Heart left ventricle (tissue), 16 donors: ENCODE measurements at regions of chr2 and their contacts with region 1.

Region 1: GRCh38 chr2:64750817-64751285 is 97.1 kb upstream of the SERTAD2 start:
- DNase-seq: peak; percentile 99 to 100 (median 100)
- ATAC-seq: peak; percentile 92 to 95 (median 94)
- H3K4me3 ChIP-seq: peak overlapping the region; percentile 50 to 88 (median 78)
- H3K27ac ChIP-seq: peak overlapping the region; percentile 74 to 99 (median 97)
- H3K4me1 ChIP-seq: peaks cover 0 to 30% (median 16%) of the 10 kb centered on the region in 12 donors
- H3K27me3 ChIP-seq: no peaks in the 10 kb centered on the region
- CTCF ChIP-seq: peak in 4 of 12 donors; percentile 15 to 46 (median 23)
- POLR2A ChIP-seq: peak; percentile 85 to 99

Region 2: GRCh38 chr2:64523666-64524603 is 226.9 kb before region 1 on chr2 and contains the start of gene AFTPH:
- intact Hi-C with region 1: loop called in 2 of 10 experiments (anchors 1 to 10 kb)
- DNase-seq: peak; percentile 99 to 100 (median 99)
- ATAC-seq: peak; percentile 99 to 100 (median 99)
- H3K4me3 ChIP-seq: peak within 1 kb of the TSS; percentile 70 to 97 (median 94)
- H3K27ac ChIP-seq: peak within 1 kb of the TSS; percentile 85 to 98 (median 94)
- H3K4me1 ChIP-seq: peaks cover 0 to 42% (median 28%) of the 10 kb centered on the region in 12 donors
- H3K27me3 ChIP-seq: no peaks in the 10 kb centered on the region
- CTCF ChIP-seq: no peak
- POLR2A ChIP-seq: peak in 1 of 2 donors; percentile 77
- total RNA-seq, gene AFTPH: 9.2 to 15.2 (median 11.4) TPM

Region 3: DNA sequence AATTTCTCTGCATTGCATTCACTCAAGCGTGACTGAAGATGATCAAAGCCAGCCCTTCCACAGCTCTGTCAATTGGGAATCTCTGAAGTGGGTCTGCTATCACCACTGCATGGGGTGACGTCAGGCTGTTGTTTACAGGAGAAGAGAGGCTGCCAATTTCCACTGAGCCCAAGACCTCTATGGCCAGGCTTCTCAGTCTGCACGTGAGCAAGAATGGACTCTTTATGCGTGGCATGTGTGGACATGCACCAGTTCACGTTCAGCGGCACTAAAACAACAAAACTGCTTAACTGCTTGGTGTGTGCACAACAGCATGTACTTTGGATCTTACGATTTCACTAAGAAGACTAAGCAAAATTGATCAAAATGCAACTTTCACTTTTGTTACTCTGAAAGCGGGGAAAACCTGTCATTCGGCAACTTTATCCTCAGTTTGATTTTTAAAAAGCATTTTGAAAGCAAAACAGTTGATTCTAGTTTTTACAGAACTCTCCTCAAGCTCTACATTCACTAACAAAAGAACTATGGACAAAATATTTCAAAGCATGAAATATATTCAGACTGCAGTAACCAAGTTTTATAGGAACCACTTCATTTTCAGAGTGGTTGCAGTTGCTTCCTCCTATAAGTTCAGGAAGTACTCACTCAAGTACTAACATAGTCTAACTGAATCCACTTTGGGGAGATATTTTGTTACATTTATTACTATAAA is 20.1 kb before region 1 on chr2:
- intact Hi-C with region 1: loop called in 1 of 10 experiments (anchors 2 kb)
- DNase-seq: peak in 4 of 5 donors; percentile 50 to 77 (median 66)
- ATAC-seq: peak; percentile 73 to 93 (median 90)
- H3K4me3 ChIP-seq: peak overlapping the region in 11 of 12 donors; percentile 3 to 60 (median 47)
- H3K27ac ChIP-seq: peak overlapping the region in 11 of 12 donors; percentile 29 to 92 (median 60)
- H3K4me1 ChIP-seq: peaks cover 0 to 52% (median 10%) of the 10 kb centered on the region in 12 donors
- H3K27me3 ChIP-seq: no peaks in the 10 kb centered on the region
- CTCF ChIP-seq: no peak
- POLR2A ChIP-seq: no peak

Region 4: DNA sequence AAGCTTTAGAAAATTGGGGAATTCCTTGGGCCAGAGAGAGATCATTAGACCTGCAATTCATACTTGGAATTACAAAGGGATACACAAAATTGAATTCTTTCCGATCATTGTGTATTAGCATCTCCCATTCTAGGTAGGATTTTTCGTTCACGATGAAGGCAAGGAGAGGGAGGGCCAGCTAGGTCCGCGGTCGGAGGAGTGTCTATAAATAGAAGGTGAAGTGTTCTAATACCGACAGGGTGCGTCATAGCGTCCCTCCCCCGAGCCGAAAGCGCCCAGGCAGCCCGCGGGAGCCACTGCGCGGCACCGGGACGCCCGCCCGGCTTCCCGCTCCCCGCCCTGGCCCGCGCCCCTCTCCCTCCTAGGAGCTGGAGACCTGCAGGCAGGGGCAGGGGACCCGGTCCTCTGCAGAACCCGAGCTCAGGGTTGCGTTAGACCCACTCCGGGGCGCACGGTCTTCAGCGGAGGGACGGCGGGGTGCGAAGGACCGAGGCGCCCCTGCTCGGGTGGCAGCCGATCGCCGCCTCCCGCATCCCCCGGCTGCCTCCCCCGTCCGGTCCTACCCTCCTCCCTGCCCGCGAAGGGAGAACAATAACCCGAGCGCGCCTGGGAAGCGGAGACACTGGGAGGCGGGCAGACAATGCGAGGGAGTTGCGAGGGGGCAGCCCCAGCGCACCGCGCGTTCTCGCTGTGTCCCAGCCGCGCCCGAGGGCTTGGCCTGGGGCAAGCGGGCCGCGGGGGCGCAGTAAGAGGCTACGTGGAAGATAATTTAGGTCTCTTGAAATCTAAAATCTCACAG is 17.0 kb after region 1 on chr2:
- intact Hi-C with region 1: loop called in 6 of 10 experiments (anchors 1 to 2 kb)
- DNase-seq: peak; percentile 93 to 95 (median 93)
- ATAC-seq: peak; percentile 94 to 97 (median 96)
- H3K4me3 ChIP-seq: peak overlapping the region; percentile 34 to 94 (median 77)
- H3K27ac ChIP-seq: peak overlapping the region; percentile 91 to 100 (median 98)
- H3K4me1 ChIP-seq: peaks cover 0 to 39% (median 21%) of the 10 kb centered on the region in 12 donors
- H3K27me3 ChIP-seq: no peaks in the 10 kb centered on the region
- CTCF ChIP-seq: peak in 6 of 12 donors; percentile 6 to 38 (median 16)
- POLR2A ChIP-seq: peak; percentile 38 to 93

Region 5: DNA sequence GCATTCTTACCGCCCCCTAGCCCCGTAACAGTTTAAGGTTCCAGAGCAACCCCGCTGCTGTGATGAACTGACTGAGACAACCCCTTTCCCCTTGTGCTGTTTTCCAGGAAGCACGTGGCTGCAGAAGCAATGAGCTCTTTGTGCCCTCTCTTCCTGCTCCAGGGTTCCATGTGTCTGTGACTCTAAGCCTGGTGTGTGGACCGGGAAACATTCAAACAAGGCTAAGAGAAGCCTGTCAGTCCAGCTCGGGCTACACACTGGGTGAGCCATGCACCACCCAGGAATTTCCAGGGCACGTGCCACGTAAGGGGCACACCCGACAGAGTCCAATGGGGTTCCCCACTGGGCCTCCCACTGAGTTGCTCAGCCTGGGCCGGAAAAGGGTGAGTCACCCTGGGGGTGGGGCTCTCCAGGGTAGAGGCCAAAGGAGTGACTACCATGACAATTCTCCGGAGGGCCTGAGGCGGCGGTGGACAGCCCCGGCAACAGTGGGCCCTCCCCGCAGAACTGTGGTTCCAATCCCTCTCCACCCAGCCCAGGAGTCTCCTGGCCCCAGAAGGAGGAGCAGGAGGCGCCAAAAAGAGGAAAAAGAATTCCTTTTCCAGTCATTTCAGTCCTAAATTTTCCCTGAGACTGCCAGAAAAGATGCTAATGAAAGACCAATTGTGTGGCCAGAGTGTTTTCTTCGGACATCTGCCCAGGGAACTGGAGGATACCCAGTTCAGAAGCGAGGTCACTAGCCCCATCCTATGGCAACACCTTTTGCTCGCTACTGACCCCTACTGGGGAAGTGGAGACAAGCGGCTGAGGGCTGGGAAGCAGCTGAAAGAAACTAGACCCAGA is 80.5 kb after region 1 on chr2:
- intact Hi-C with region 1: loop called in 2 of 10 experiments (anchors 5 to 10 kb)
- DNase-seq: peak; percentile 77 to 93 (median 88)
- ATAC-seq: peak; percentile 79 to 98 (median 97)
- H3K4me3 ChIP-seq: peak overlapping the region in 3 of 12 donors; percentile 2 to 37 (median 9)
- H3K27ac ChIP-seq: peak overlapping the region in 11 of 12 donors; percentile 31 to 90 (median 72)
- H3K4me1 ChIP-seq: peaks cover 0 to 18% (median 10%) of the 10 kb centered on the region in 12 donors
- H3K27me3 ChIP-seq: no peaks in the 10 kb centered on the region
- CTCF ChIP-seq: peak; percentile 83 to 95 (median 88)
- POLR2A ChIP-seq: no peak

Region 6: DNA sequence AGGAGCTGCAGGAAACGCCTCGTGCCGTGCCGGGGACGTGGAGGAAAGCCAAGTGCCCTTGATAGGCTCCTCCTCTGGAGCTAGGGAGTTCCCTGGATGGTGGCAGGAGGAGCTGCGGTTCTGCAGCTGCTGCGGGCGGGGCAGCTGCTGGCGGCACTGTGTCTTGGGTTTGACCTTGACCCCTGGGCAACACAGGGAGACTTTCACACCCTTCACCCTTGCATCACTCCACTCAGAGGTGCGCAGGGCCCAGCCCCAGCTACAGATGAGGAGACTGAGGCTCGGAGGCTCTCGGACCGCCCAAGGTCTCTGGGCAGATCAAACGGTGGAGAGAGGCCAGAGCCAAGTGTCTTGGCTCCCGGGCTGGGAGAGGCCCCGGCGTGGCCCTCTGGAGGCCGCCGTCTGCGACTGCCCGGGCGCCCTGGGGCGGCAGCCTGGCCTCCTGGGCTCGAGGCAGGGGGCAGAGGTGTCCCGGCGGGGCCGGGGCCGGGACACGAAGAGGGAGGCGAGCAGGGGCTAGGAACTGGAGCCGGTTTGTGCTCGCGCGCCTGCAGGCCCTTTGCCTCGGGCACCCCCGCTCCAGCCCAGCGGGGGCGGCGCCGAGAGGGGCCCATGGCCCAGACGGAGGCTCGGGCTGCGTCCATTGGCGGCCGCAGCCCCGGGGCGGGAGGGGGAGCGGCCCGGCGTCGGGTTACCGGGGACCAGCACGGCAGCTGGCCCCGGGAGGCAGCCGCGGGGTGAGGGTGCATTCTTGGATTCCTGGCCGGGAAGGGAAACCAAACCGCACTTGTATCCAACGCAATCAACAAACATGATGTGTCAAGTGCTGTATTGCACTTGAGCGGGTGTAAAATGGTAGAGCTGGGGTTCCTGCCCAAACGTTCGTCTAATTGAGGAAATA is 108.7 kb after region 1 on chr2:
- intact Hi-C with region 1: loop called in 9 of 10 experiments (anchors 1 to 10 kb)
- DNase-seq: peak; percentile 87 to 95 (median 93)
- ATAC-seq: peak; percentile 76 to 88 (median 84)
- H3K4me3 ChIP-seq: peak overlapping the region; percentile 0 to 62 (median 54)
- H3K27ac ChIP-seq: peak overlapping the region; percentile 90 to 99 (median 94)
- H3K4me1 ChIP-seq: peaks cover 13 to 87% (median 36%) of the 10 kb centered on the region in 12 donors
- H3K27me3 ChIP-seq: no peaks in the 10 kb centered on the region
- CTCF ChIP-seq: peak in 2 of 12 donors; percentile 6 to 14
- POLR2A ChIP-seq: peak in 1 of 2 donors; percentile 45

Region 7: GRCh38 chr2:64865073-64865830 is 114.4 kb after region 1 on chr2:
- intact Hi-C with region 1: loop called in 6 of 10 experiments (anchors 2 to 10 kb)
- DNase-seq: peak; percentile 68 to 82 (median 71)
- ATAC-seq: peak; percentile 62 to 90 (median 80)
- H3K4me3 ChIP-seq: peak overlapping the region; percentile 47 to 88 (median 82)
- H3K27ac ChIP-seq: peak overlapping the region; percentile 77 to 94 (median 90)
- H3K4me1 ChIP-seq: peaks cover 0 to 58% (median 6%) of the 10 kb centered on the region in 12 donors
- H3K27me3 ChIP-seq: no peaks in the 10 kb centered on the region
- CTCF ChIP-seq: peak; percentile 28 to 100 (median 81)
- POLR2A ChIP-seq: no peak